ENCODE measurements at regions of chr2 and their contacts with region 1.

Region 1: DNA sequence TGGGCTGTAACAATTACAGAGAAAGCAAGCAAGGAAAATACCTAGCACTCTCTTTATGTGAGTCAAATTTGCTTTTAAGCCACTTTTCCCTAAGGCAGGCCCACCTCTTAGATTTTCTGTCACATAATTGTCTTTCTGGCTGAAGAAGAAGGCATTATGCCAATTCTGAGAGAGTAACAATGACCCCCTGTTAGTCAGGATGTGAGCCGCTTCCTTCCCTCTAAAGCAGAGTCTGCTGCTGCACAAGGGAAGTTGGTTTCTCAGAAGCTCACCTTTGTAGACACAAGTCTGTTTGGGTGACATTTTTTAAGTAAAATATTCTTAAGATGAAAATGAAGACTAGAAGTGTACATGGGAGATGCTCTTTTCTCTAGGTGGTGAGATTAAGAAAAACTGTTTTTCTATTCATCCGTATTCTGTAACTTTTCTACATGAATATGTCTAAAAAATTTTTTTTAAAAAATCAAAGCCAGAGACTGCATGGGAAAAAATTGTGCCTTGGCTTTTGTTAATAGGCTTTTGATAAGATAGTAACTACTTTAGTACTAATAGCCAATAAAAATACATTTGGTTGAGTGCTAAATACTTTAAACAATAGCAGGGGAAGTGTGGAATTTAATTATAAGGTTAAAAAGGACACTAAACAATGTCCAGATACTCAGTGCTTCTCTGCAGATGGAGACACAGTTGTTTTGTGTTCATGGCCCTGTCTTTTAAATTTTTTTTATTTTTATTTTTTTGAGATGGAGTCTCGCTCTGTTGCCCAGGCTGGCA is 33.4 kb upstream of the VPS54 start:
- DNase-seq: no peak
- CTCF ChIP-seq: no peak

Region 2: DNA sequence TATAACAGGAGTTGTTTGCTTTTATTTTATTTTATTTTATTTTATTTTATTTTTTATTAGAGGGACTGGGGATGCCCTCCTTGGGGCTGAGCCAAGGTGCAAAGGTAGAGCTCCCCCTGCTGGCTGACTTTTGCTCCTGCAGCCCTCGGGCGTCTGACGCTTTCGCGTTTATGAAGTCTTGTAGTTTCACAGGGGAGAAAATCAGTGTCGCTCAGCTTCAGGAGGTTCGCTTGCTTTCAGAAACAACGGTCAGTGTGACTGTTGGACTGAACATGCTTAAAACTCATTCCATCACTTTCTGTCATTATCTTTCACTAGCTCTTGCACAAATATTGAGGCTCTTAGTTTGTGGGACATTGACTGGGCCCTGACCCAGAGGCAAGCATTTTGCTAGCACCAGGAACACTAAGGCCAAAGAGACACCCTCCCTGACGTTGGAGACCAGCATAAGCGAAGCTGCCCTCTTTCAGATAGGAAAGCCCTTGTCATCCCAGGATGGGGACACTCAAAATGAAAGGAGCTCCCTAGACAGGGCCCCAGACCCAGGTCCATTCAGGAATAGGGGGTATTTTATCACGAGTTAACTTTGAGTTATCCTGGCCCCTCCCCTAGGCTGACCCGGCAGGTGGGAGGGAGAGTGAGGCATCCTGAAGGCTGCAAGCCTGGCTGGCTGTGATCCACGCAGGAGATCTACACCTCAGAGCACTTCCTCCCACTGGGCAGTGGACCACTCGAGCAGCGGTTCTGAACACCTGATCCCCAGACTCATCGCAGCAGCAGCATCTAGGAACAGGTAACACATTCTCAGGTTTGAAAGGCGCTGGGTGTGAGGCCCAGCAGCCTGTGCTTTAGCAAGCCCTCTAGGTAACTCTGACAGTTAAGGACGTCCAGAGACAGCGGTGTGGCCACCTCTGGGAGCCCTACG is 435.7 kb after region 1 on chr2:
- in situ Hi-C with region 1: loop called (anchors 10 kb)
- DNase-seq: peak; percentile 75
- CTCF ChIP-seq: peak; percentile 87

Measured in GM13977 (cell line).